CD8-positive, alpha-beta T cell (primary cell): ENCODE measurements at regions of chr10 and their contacts with region 1.

Region 1: GRCh38 chr10:80504158-80504811 is 33.4 kb upstream of the SH2D4B start:
- DNase-seq: no peak
- ATAC-seq: no peak
- H3K4me3 ChIP-seq: no peak overlapping the region
- H3K4me3 Mint-ChIP-seq: peak overlapping the region; percentile 30
- H3K27ac ChIP-seq: peak overlapping the region in 1 of 2 experiments; percentile 71
- H3K27ac Mint-ChIP-seq: peak overlapping the region; percentile 94
- H3K4me1 ChIP-seq: peaks cover 69% of the 10 kb centered on the region
- H3K4me1 Mint-ChIP-seq: peaks cover 71% of the 10 kb centered on the region
- H3K27me3 ChIP-seq: no peaks in the 10 kb centered on the region
- H3K27me3 Mint-ChIP-seq: no peaks in the 10 kb centered on the region
- CTCF ChIP-seq: no peak

Region 2: GRCh38 chr10:80100111-80100510 is 404.2 kb before region 1 on chr10:
- CTCF ChIA-PET with region 1: no interaction called
- POLR2A ChIA-PET with region 1: no interaction called
- intact Hi-C with region 1: no loop called
- DNase-seq: no peak
- ATAC-seq: no peak
- H3K4me3 ChIP-seq: no peak overlapping the region
- H3K4me3 Mint-ChIP-seq: no peak overlapping the region
- H3K27ac ChIP-seq: no peak overlapping the region
- H3K27ac Mint-ChIP-seq: no peak overlapping the region
- H3K4me1 ChIP-seq: peaks cover 7% of the 10 kb centered on the region
- H3K4me1 Mint-ChIP-seq: peaks cover 8% of the 10 kb centered on the region
- H3K27me3 ChIP-seq: no peaks in the 10 kb centered on the region
- H3K27me3 Mint-ChIP-seq: peaks cover 7% of the 10 kb centered on the region
- CTCF ChIP-seq: no peak

Region 3: DNA sequence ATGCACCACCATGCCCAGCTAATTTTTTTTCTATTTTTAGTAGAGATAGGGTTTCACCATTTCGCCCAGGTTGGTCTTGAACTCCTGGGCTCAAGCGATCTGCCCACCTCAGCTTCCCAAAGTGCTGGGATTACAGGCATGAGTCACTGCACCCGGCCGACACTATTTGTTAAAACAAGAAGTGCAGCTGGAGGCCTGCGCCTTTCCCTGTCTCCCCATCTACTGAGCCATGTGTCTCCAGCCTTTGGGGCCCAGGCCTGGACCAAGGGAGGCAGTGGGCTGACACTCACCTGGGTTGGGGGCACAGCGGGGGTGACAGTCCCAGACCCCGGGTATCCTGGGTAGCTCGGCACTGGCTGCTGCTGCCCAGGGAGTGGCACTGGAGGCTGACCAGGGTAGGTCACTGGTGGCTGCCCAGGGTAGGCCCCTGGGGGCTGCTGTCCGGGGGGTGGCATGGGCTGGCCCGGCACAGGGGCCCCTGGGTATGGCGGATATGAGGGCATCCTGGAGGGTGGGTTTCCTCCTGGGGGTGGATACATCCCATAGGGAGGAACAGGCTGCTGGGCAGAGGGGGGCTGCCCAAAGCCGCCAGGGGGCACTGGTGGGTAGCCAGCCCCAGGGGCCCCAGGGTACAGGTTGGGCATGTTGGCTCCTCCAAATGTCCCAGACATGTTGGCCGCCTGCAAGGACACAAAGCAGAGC is 335.5 kb before region 1 on chr10:
- CTCF ChIA-PET with region 1: no interaction called
- POLR2A ChIA-PET with region 1: no interaction called
- intact Hi-C with region 1: no loop called
- DNase-seq: peak in 3 of 9 experiments; percentile 28 to 44 (median 44)
- ATAC-seq: no peak
- H3K4me3 ChIP-seq: no peak overlapping the region
- H3K4me3 Mint-ChIP-seq: no peak overlapping the region
- H3K27ac ChIP-seq: no peak overlapping the region
- H3K27ac Mint-ChIP-seq: no peak overlapping the region
- H3K4me1 ChIP-seq: peaks cover 4% of the 10 kb centered on the region
- H3K4me1 Mint-ChIP-seq: peaks cover 22% of the 10 kb centered on the region
- H3K27me3 ChIP-seq: no peaks in the 10 kb centered on the region
- H3K27me3 Mint-ChIP-seq: no peaks in the 10 kb centered on the region
- CTCF ChIP-seq: no peak

Region 4: DNA sequence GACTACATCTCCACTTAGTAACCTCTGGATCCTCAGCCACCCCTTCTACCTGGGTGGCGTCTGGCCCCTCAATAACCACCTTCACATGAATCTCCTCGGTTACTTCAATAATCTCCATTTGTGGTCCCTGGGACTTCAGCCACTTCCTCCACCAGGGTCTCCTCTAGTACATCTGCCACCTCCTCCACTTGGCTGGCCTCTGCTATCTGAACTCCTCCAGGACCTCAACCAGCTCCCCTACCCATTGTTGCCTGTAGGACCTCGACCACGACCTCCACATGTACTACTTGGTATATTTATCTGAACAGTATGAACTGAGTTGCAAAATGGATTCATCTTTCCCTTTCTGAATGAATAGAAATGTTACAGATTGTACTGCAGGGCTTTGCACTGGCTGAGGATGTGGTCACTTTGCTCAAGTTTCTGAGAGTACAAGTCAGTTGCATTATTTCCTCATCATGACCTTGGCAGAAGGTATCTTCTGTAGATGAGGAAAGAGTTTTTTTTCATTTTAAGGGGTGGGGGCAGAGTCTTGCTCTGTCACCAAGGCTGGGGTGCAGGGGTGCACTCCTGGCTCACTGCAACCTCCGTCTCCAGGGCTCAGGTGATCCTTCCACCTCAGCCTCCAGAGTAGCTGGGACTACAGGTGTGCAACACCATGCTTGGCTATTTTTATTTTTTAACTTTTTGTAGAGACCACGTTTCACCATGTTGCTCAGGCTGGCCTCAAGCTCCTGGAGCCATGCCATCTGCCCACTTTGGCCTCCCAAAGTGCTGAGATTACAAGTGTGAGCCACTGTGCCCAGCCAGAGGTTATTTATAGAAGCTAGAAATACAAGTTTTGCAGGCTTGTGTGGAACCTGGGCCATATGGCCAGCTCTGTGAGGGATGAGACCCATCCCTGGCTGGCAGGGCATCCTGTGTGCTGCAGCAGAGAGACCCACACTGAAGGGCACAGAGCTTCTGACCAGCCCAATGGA is 250.7 kb before region 1 on chr10:
- CTCF ChIA-PET with region 1: no interaction called
- POLR2A ChIA-PET with region 1: no interaction called
- intact Hi-C with region 1: no loop called
- DNase-seq: no peak
- ATAC-seq: no peak
- H3K4me3 ChIP-seq: no peak overlapping the region
- H3K4me3 Mint-ChIP-seq: no peak overlapping the region
- H3K27ac ChIP-seq: no peak overlapping the region
- H3K27ac Mint-ChIP-seq: no peak overlapping the region
- H3K4me1 ChIP-seq: no peaks in the 10 kb centered on the region
- H3K4me1 Mint-ChIP-seq: peaks cover 7% of the 10 kb centered on the region
- H3K27me3 ChIP-seq: no peaks in the 10 kb centered on the region
- H3K27me3 Mint-ChIP-seq: peaks cover 7% of the 10 kb centered on the region
- CTCF ChIP-seq: no peak

Region 5: DNA sequence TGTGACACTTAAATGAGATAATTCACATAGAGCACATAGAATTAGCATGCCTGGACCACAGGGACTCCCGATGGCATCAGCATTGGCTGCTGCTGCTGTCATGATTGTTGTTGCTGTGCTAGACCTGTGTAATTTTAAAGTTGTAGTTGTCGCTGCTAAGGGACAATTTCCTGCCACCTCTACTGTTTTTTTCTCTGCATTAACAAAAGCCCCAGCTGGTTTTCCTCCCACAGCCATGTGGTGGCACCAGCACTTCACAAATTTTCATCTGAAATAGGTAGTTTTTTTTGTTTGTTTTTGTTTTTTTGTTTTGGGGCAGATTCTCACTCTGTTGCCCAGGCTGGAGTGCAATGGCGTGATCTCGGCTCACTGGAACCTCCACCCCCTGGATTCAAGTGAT is 121.3 kb before region 1 on chr10:
- CTCF ChIA-PET with region 1: interaction called, 63 read pairs
- POLR2A ChIA-PET with region 1: no interaction called
- intact Hi-C with region 1: loop called (anchors 1 kb)
- DNase-seq: peak; percentile 11 to 77 (median 48)
- ATAC-seq: peak; percentile 77
- H3K4me3 ChIP-seq: no peak overlapping the region
- H3K4me3 Mint-ChIP-seq: no peak overlapping the region
- H3K27ac ChIP-seq: no peak overlapping the region
- H3K27ac Mint-ChIP-seq: peak overlapping the region; percentile 73
- H3K4me1 ChIP-seq: peaks cover 4% of the 10 kb centered on the region
- H3K4me1 Mint-ChIP-seq: peaks cover 15% of the 10 kb centered on the region
- H3K27me3 ChIP-seq: no peaks in the 10 kb centered on the region
- H3K27me3 Mint-ChIP-seq: no peaks in the 10 kb centered on the region
- CTCF ChIP-seq: peak; percentile 83

Region 6: GRCh38 chr10:80429521-80429966 is 74.7 kb before region 1 on chr10:
- CTCF ChIA-PET with region 1: interaction called, 16 read pairs
- POLR2A ChIA-PET with region 1: no interaction called
- intact Hi-C with region 1: no loop called
- DNase-seq: no peak
- ATAC-seq: no peak
- H3K4me3 ChIP-seq: no peak overlapping the region
- H3K4me3 Mint-ChIP-seq: no peak overlapping the region
- H3K27ac ChIP-seq: no peak overlapping the region
- H3K27ac Mint-ChIP-seq: no peak overlapping the region
- H3K4me1 ChIP-seq: no peaks in the 10 kb centered on the region
- H3K4me1 Mint-ChIP-seq: no peaks in the 10 kb centered on the region
- H3K27me3 ChIP-seq: no peaks in the 10 kb centered on the region
- H3K27me3 Mint-ChIP-seq: no peaks in the 10 kb centered on the region
- CTCF ChIP-seq: no peak

Region 7: GRCh38 chr10:80444646-80445319 is 59.5 kb before region 1 on chr10:
- CTCF ChIA-PET with region 1: interaction called, 562 read pairs
- POLR2A ChIA-PET with region 1: interaction called, 31 read pairs
- intact Hi-C with region 1: loop called (anchors 1 kb)
- DNase-seq: peak in 8 of 9 experiments; percentile 41 to 87 (median 65)
- ATAC-seq: peak; percentile 86
- H3K4me3 ChIP-seq: no peak overlapping the region
- H3K4me3 Mint-ChIP-seq: no peak overlapping the region
- H3K27ac ChIP-seq: no peak overlapping the region
- H3K27ac Mint-ChIP-seq: peak overlapping the region; percentile 79
- H3K4me1 ChIP-seq: peaks cover 42% of the 10 kb centered on the region
- H3K4me1 Mint-ChIP-seq: peaks cover 51% of the 10 kb centered on the region
- H3K27me3 ChIP-seq: no peaks in the 10 kb centered on the region
- H3K27me3 Mint-ChIP-seq: no peaks in the 10 kb centered on the region
- CTCF ChIP-seq: peak; percentile 42

Region 8: DNA sequence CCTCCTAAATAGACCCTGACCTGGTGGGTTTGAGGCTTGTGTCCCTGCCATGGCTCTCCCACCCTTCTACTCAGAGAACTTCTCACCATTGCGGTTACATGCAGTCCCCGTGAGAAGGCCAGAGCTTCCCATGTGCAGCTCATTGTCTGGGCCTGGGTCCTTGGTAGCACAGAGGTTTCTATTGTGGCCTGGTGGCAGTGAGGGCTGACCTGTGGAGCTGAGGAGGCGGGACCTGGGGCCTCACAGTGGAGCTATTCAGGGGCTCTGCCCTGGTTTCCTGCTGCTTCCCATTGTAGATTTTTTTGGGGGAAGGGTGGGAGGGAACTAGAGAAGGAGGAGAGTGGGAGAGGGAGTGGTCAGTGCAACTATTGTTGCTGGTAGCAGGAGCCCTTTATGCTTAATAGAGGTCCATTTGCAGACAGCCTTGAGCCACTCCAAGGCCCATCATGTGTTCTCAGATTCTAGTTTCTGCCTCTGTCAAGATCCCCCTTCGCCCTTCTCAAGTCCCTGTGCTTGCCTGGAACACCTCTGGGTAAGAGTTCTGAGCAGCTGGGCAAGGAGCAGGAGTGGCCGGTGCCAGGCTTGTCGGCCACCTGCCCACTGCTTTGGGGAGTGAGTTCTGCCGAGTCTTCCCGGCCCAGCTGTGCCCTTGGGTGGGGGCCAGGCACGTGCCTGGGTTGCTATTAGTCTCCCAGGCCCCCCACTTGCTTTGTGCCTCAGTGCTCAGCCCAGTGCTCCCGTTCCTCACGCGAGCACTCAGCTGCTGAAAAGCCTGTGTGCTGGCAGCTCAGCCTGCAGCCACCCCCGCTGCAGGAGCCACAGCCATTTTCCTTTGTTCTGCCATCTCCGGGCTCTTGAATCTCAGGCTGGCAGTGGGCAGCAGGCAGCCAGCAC is 39.5 kb before region 1 on chr10:
- CTCF ChIA-PET with region 1: interaction called, 404 read pairs
- POLR2A ChIA-PET with region 1: interaction called, 80 read pairs
- intact Hi-C with region 1: loop called in 1 of 2 experiments (anchors 1 kb)
- DNase-seq: peak in 3 of 9 experiments; percentile 32 to 60 (median 41)
- ATAC-seq: peak; percentile 2
- H3K4me3 ChIP-seq: peak overlapping the region; percentile 25 to 30
- H3K4me3 Mint-ChIP-seq: peak overlapping the region; percentile 77
- H3K27ac ChIP-seq: peak overlapping the region; percentile 49 to 81
- H3K27ac Mint-ChIP-seq: peak overlapping the region; percentile 98
- H3K4me1 ChIP-seq: peaks cover 94% of the 10 kb centered on the region
- H3K4me1 Mint-ChIP-seq: peaks cover 96% of the 10 kb centered on the region
- H3K27me3 ChIP-seq: no peaks in the 10 kb centered on the region
- H3K27me3 Mint-ChIP-seq: no peaks in the 10 kb centered on the region
- CTCF ChIP-seq: no peak

Region 9: GRCh38 chr10:80516506-80517075 is 12.3 kb after region 1 on chr10:
- CTCF ChIA-PET with region 1: interaction called, 34 read pairs
- POLR2A ChIA-PET with region 1: interaction called, 5 read pairs
- intact Hi-C with region 1: no loop called
- DNase-seq: no peak
- ATAC-seq: no peak
- H3K4me3 ChIP-seq: no peak overlapping the region
- H3K4me3 Mint-ChIP-seq: no peak overlapping the region
- H3K27ac ChIP-seq: no peak overlapping the region
- H3K27ac Mint-ChIP-seq: peak overlapping the region; percentile 79
- H3K4me1 ChIP-seq: peaks cover 8% of the 10 kb centered on the region
- H3K4me1 Mint-ChIP-seq: peaks cover 19% of the 10 kb centered on the region
- H3K27me3 ChIP-seq: no peaks in the 10 kb centered on the region
- H3K27me3 Mint-ChIP-seq: no peaks in the 10 kb centered on the region
- CTCF ChIP-seq: no peak

Region 10: GRCh38 chr10:80580638-80581468 is 76.6 kb after region 1 on chr10:
- CTCF ChIA-PET with region 1: interaction called, 15 read pairs
- POLR2A ChIA-PET with region 1: no interaction called
- intact Hi-C with region 1: no loop called
- DNase-seq: no peak
- ATAC-seq: no peak
- H3K4me3 ChIP-seq: no peak overlapping the region
- H3K4me3 Mint-ChIP-seq: no peak overlapping the region
- H3K27ac ChIP-seq: no peak overlapping the region
- H3K27ac Mint-ChIP-seq: no peak overlapping the region
- H3K4me1 ChIP-seq: no peaks in the 10 kb centered on the region
- H3K4me1 Mint-ChIP-seq: no peaks in the 10 kb centered on the region
- H3K27me3 ChIP-seq: no peaks in the 10 kb centered on the region
- H3K27me3 Mint-ChIP-seq: peaks cover 9% of the 10 kb centered on the region
- CTCF ChIP-seq: no peak